ENCODE measurements at regions of chr6 and their contacts with region 1.

Region 1: GRCh38 chr6:36874443-36875249 is at the start of gene PPIL1:
- DNase-seq: peak; percentile 90
- H3K4me3 Mint-ChIP-seq: peak within 1 kb of the TSS; percentile 88
- H3K27ac Mint-ChIP-seq: peak within 1 kb of the TSS; percentile 95
- H3K4me1 Mint-ChIP-seq: peaks cover 14% of the 10 kb centered on the region
- H3K27me3 Mint-ChIP-seq: no peaks in the 10 kb centered on the region
- CTCF ChIP-seq: no peak
- total RNA-seq, gene PPIL1: 53.6 and 54.9 TPM in 2 replicates

Region 2: DNA sequence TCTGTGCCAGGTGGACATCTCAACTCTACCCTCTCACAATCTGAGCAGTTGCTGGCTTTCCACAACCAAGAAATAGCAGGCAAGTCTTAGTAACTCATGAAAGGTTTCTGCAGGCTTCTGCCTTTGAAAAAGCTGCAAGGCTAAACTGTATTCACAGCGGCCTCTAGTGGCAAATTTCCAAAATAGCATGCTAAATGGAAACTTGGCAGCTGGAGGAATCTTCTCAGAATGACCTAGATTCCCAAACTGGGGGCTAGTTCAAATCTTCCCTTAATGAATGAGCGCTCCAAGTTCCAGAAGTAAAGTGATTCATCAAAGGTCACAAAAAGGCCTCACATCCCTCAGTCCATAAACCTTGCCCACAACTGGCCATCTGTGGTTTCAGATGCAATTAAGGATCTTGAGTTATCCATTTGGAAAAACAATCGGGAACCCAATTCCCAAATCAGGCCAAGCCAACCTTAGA is 23.5 kb before region 1 on chr6:
- CTCF ChIA-PET with region 1: interaction called, 6 read pairs
- POLR2A ChIA-PET with region 1: interaction called, 18 read pairs
- intact Hi-C with region 1: no loop called
- DNase-seq: peak; percentile 74
- H3K4me3 Mint-ChIP-seq: no peak overlapping the region
- H3K27ac Mint-ChIP-seq: no peak overlapping the region
- H3K4me1 Mint-ChIP-seq: peaks cover 17% of the 10 kb centered on the region
- H3K27me3 Mint-ChIP-seq: no peaks in the 10 kb centered on the region
- CTCF ChIP-seq: peak; percentile 83

Region 3: DNA sequence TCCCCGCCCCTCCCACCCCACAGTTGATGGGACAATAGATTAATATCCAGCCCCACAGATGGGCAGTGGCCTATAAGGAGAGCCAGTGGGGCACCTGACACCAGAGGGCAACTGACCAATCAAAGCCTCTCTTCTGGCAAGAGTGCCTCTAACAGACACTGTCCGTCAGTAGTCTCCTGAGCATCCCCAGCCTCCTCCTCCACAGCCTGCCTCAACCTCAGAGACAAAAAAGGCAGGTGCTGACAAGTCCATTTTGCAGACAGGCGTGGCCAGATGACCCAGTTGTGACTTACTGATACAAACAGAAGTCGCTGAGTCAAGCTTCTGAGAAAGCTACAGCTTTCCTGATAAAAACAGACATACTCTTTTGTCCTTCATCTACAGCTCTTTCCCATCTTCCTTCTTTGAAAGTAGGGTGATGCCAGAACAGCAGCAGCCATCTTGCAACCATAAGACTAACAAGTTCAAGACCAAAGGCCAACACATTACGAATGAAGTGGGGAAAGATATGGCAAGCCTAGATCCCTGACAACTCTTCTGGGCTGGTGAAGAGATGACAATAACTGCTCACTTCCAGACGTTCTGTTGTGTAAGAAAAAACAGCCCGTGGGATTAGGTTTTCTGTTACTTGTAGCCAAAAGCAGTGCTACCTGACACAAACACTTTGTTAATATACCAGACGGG is 12.3 kb before region 1 on chr6:
- CTCF ChIA-PET with region 1: interaction called, 6 read pairs
- POLR2A ChIA-PET with region 1: interaction called, 26 read pairs
- intact Hi-C with region 1: no loop called
- DNase-seq: peak; percentile 61
- H3K4me3 Mint-ChIP-seq: no peak overlapping the region
- H3K27ac Mint-ChIP-seq: no peak overlapping the region
- H3K4me1 Mint-ChIP-seq: peaks cover 28% of the 10 kb centered on the region
- H3K27me3 Mint-ChIP-seq: no peaks in the 10 kb centered on the region
- CTCF ChIP-seq: no peak

Region 4: DNA sequence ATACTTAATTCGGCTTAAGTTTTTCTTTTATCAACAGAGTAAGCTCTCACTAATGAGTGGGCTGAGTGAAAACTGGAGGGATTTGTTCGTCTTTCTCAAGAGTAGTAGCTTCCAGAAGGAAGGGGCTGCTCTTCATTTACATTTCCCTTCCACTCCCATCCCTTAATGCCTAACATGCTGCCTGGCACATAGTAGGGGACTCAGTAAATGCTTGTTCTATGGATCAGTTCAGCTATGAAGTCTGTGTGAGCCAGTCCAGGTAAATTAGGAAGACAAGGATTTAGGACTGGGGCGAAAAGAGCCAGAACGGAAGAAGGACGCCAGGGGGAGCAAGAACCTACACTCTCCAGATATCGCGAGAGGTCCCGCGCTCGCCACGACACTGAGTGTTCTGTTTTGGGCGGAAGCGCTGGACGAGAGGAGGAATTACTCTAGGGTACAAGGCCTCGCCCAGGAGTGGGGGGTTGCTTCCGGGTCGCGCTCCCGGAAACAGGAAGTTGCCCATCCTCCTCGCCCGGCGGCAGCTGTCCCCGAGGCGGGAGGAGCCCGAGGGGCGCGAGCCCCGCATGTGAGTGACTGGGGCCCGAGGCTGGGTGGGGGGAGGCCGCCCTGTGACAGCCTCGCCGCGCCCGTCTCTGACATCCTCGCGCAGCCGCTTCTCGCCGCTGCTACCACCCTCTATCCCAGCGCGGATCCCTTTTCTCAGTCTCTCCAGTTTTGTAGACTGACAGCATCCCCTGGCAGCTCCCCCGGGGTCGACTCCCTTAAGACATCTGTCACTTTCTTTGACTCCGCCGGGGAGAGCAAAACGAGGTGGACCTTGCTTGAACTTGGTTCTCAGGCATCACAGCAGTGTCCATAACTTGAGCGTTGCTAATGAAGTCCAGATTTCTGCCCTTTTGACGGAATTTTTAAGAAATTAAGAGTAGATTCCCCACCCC is 11.1 kb after region 1 on chr6 and contains the start of gene C6orf89:
- CTCF ChIA-PET with region 1: interaction called, 25 read pairs
- POLR2A ChIA-PET with region 1: interaction called, 55 read pairs
- intact Hi-C with region 1: no loop called
- DNase-seq: peak; percentile 99
- H3K4me3 Mint-ChIP-seq: peak within 1 kb of the TSS; percentile 80
- H3K27ac Mint-ChIP-seq: peak within 1 kb of the TSS; percentile 88
- H3K4me1 Mint-ChIP-seq: peaks cover 16% of the 10 kb centered on the region
- H3K27me3 Mint-ChIP-seq: no peaks in the 10 kb centered on the region
- CTCF ChIP-seq: peak; percentile 63
- total RNA-seq, gene C6orf89: 36.9 and 43.1 TPM in 2 replicates

Region 5: GRCh38 chr6:36968266-36968977 is 93.8 kb after region 1 on chr6:
- CTCF ChIA-PET with region 1: no interaction called
- POLR2A ChIA-PET with region 1: no interaction called
- intact Hi-C with region 1: no loop called
- DNase-seq: peak; percentile 74
- H3K4me3 Mint-ChIP-seq: no peak overlapping the region
- H3K27ac Mint-ChIP-seq: no peak overlapping the region
- H3K4me1 Mint-ChIP-seq: peaks cover 26% of the 10 kb centered on the region
- H3K27me3 Mint-ChIP-seq: no peaks in the 10 kb centered on the region
- CTCF ChIP-seq: no peak

Region 6: DNA sequence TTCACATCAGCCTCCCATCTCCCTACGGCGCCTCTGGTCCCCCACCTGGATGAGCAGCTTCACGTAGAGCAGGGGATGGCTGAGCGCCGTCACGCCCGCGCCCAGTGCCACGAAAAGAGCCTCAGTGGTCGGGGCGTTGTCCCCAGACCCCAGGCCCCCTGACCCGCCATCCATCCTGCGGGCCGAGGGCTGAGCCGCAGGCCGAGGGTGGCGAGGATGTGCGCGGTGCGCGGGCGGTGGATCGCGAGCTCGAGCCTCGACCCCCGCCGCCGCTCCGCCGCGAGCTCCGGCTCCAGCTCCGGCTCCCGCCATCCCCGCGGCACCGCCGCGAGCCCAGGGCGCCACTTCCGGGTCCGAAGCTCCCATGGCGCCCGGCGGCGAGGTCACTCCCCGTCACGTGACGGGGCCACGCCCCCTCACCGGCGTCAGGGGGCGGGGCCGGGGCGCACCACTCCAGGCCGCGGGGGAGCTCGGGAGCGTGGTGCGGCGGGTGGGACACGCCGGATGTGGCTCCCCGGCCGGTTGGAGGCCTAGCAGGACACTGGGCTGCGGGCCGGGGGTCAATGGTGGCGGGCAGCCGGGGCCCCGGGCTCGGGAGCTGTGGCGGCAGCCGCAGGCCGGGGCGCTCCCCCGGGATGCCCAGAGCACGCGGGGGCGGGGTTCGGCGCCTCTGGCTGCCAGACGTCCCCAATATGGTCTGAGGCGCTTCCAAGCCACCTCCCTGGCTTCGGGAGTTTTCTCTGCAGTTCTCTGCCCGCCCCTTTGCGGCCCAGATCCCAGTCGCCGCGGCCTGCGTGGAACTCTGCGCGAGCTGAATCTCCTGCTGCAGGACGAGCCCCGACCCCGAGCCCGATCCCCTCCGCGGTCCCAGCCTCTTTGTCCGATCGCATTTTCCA is 111.4 kb after region 1 on chr6 and contains the start of gene MTCH1:
- CTCF ChIA-PET with region 1: no interaction called
- POLR2A ChIA-PET with region 1: interaction called, 18 read pairs
- intact Hi-C with region 1: no loop called
- DNase-seq: peak; percentile 86
- H3K4me3 Mint-ChIP-seq: no peak within 1 kb of the TSS
- H3K27ac Mint-ChIP-seq: no peak within 1 kb of the TSS
- H3K4me1 Mint-ChIP-seq: peaks cover 14% of the 10 kb centered on the region
- H3K27me3 Mint-ChIP-seq: no peaks in the 10 kb centered on the region
- CTCF ChIP-seq: no peak
- total RNA-seq, gene MTCH1: 74.9 and 78.2 TPM in 2 replicates

Region 7: GRCh38 chr6:37653933-37654565 is 779.4 kb after region 1 on chr6:
- CTCF ChIA-PET with region 1: no interaction called
- POLR2A ChIA-PET with region 1: no interaction called
- intact Hi-C with region 1: no loop called
- DNase-seq: peak; percentile 77
- H3K4me3 Mint-ChIP-seq: no peak overlapping the region
- H3K27ac Mint-ChIP-seq: no peak overlapping the region
- H3K4me1 Mint-ChIP-seq: peaks cover 8% of the 10 kb centered on the region
- H3K27me3 Mint-ChIP-seq: no peaks in the 10 kb centered on the region
- CTCF ChIP-seq: peak; percentile 86

Measured in MCF 10A (cell line).